Caco-2 (cell line): ENCODE measurements at regions of chr2 and their contacts with region 1.

Region 1: GRCh38 chr2:96856776-96857673 is 791 bp downstream of the ANKRD39 start:
- DNase-seq: peak in 1 of 2 experiments; percentile 45
- H3K4me3 ChIP-seq: peak overlapping the region; percentile 79
- H3K4me3 Mint-ChIP-seq: peak overlapping the region; percentile 68
- H3K27ac Mint-ChIP-seq: peak overlapping the region; percentile 10
- H3K4me1 ChIP-seq: peaks cover 9% of the 10 kb centered on the region
- H3K4me1 Mint-ChIP-seq: peaks cover 17% of the 10 kb centered on the region
- H3K27me3 ChIP-seq: no peaks in the 10 kb centered on the region
- H3K27me3 Mint-ChIP-seq: no peaks in the 10 kb centered on the region
- CTCF ChIP-seq: no peak

Region 2: GRCh38 chr2:96665083-96665569 is 191.9 kb before region 1 on chr2:
- CTCF ChIA-PET with region 1: no interaction called
- POLR2A ChIA-PET with region 1: no interaction called
- intact Hi-C with region 1: no loop called
- DNase-seq: peak; percentile 34 to 41
- H3K4me3 ChIP-seq: no peak overlapping the region
- H3K4me3 Mint-ChIP-seq: no peak overlapping the region
- H3K27ac Mint-ChIP-seq: no peak overlapping the region
- H3K4me1 ChIP-seq: no peaks in the 10 kb centered on the region
- H3K4me1 Mint-ChIP-seq: peaks cover 13% of the 10 kb centered on the region
- H3K27me3 ChIP-seq: no peaks in the 10 kb centered on the region
- H3K27me3 Mint-ChIP-seq: no peaks in the 10 kb centered on the region
- CTCF ChIP-seq: no peak

Region 3: GRCh38 chr2:96685577-96686459 is 171.2 kb before region 1 on chr2:
- CTCF ChIA-PET with region 1: no interaction called
- POLR2A ChIA-PET with region 1: no interaction called
- intact Hi-C with region 1: no loop called
- DNase-seq: no peak
- H3K4me3 ChIP-seq: no peak overlapping the region
- H3K4me3 Mint-ChIP-seq: no peak overlapping the region
- H3K27ac Mint-ChIP-seq: no peak overlapping the region
- H3K4me1 ChIP-seq: peaks cover 12% of the 10 kb centered on the region
- H3K4me1 Mint-ChIP-seq: peaks cover 6% of the 10 kb centered on the region
- H3K27me3 ChIP-seq: no peaks in the 10 kb centered on the region
- H3K27me3 Mint-ChIP-seq: no peaks in the 10 kb centered on the region
- CTCF ChIP-seq: no peak

Region 4: DNA sequence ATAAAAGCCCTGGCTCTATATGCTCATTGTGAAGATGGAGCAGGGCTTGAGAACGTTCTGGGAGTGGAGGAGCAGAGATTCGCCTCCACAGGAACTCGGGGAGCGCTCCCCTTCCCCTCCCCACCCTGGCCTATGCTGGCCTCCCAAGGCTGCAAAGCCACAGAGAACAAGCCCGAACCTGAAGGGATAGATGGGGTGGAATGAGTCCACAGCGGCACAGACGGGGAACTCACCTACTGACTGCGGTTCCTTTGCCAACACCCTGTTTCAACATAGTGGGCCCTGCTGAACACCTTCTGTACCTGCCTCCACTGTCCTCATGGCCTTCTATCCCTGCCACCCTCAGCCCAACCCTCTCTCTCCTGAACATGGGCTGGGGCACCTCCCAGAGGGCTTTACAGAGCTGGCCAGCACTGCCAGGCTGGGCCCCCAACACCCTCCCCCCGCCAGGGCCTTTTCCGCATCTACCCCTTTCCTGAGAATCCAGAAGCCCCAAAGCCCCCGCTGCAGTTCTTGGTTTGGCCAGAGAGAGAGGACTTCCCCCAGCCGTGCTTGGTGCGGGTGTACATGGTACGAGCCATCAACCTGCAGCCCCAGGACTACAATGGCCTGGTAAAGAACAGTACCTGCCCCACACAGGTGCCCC is 158.7 kb before region 1 on chr2:
- CTCF ChIA-PET with region 1: no interaction called
- POLR2A ChIA-PET with region 1: no interaction called
- intact Hi-C with region 1: no loop called
- DNase-seq: no peak
- H3K4me3 ChIP-seq: no peak overlapping the region
- H3K4me3 Mint-ChIP-seq: no peak overlapping the region
- H3K27ac Mint-ChIP-seq: no peak overlapping the region
- H3K4me1 ChIP-seq: no peaks in the 10 kb centered on the region
- H3K4me1 Mint-ChIP-seq: no peaks in the 10 kb centered on the region
- H3K27me3 ChIP-seq: no peaks in the 10 kb centered on the region
- H3K27me3 Mint-ChIP-seq: no peaks in the 10 kb centered on the region
- CTCF ChIP-seq: no peak

Region 5: DNA sequence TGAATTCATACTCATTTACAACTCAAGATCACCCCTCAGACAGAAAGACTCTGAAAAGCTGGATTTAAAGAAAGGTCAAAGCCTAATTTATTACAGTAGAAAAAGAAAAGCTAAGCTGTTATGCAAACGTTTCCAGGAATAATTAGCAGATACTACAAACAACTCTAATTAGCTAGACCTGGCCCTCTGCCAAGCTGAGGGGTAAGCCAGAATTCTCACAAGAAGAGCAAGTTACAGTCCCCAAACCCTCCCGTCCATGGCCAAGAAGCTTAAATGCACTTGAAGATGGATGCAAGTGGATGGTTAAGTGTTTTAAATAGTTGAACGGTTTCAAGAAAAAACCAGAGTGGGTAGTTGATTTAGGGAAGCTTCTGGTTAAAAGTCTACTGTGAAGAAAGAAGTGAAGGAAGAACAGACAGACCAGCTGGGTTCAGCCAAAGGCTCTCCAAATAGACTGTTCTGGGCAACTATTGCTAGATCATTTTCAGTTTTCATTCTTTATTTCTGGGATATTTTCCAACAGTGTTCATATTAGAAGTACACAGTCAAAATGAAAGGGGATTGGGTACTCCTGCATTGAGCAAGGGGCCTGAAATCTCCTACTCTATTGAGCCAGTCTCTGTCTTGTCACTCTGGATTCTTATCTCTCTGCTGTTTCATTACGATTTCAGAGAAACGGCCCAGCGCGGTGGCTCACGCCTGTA is 122.0 kb before region 1 on chr2:
- CTCF ChIA-PET with region 1: no interaction called
- POLR2A ChIA-PET with region 1: no interaction called
- intact Hi-C with region 1: no loop called
- DNase-seq: no peak
- H3K4me3 ChIP-seq: no peak overlapping the region
- H3K4me3 Mint-ChIP-seq: no peak overlapping the region
- H3K27ac Mint-ChIP-seq: no peak overlapping the region
- H3K4me1 ChIP-seq: peaks cover 6% of the 10 kb centered on the region
- H3K4me1 Mint-ChIP-seq: peaks cover 10% of the 10 kb centered on the region
- H3K27me3 ChIP-seq: no peaks in the 10 kb centered on the region
- H3K27me3 Mint-ChIP-seq: no peaks in the 10 kb centered on the region
- CTCF ChIP-seq: no peak

Region 6: DNA sequence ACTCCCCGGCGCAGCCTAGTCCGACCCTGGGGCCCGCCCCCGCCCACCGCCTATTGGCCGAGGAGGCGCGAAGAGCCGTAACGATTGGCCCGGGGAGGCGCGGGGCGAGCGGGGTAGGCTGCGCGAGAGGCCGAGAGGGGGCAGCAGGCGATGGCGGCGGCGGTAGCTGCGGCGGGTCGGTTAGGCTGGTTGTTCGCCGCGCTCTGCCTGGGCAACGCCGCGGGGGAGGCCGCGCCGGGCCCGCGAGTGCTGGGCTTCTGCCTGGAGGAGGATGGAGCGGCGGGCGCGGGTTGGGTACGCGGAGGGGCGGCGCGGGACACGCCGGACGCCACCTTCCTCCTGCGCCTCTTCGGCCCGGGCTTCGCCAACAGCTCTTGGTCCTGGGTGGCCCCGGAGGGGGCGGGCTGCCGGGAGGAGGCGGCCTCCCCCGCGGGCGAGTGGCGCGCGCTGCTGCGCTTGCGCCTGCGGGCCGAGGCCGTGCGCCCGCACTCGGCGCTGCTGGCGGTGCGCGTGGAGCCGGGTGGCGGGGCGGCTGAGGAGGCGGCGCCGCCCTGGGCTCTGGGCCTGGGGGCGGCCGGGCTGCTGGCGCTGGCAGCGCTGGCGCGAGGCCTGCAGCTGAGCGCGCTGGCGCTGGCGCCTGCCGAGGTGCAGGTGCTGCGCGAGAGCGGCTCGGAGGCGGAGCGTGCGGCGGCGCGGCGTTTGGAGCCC is 40.7 kb before region 1 on chr2 and contains the start of gene CNNM3:
- CTCF ChIA-PET with region 1: interaction called, 17 read pairs
- POLR2A ChIA-PET with region 1: interaction called, 7 read pairs
- intact Hi-C with region 1: no loop called
- DNase-seq: peak; percentile 97 to 99
- H3K4me3 ChIP-seq: peak within 1 kb of the TSS; percentile 96
- H3K4me3 Mint-ChIP-seq: peak within 1 kb of the TSS; percentile 84
- H3K27ac Mint-ChIP-seq: peak within 1 kb of the TSS; percentile 42
- H3K4me1 ChIP-seq: peaks cover 32% of the 10 kb centered on the region
- H3K4me1 Mint-ChIP-seq: peaks cover 42% of the 10 kb centered on the region
- H3K27me3 ChIP-seq: no peaks in the 10 kb centered on the region
- H3K27me3 Mint-ChIP-seq: no peaks in the 10 kb centered on the region
- CTCF ChIP-seq: peak; percentile 60 to 72
- total RNA-seq, gene CNNM3: 62.5 and 69.1 TPM in 2 replicates

Region 7: DNA sequence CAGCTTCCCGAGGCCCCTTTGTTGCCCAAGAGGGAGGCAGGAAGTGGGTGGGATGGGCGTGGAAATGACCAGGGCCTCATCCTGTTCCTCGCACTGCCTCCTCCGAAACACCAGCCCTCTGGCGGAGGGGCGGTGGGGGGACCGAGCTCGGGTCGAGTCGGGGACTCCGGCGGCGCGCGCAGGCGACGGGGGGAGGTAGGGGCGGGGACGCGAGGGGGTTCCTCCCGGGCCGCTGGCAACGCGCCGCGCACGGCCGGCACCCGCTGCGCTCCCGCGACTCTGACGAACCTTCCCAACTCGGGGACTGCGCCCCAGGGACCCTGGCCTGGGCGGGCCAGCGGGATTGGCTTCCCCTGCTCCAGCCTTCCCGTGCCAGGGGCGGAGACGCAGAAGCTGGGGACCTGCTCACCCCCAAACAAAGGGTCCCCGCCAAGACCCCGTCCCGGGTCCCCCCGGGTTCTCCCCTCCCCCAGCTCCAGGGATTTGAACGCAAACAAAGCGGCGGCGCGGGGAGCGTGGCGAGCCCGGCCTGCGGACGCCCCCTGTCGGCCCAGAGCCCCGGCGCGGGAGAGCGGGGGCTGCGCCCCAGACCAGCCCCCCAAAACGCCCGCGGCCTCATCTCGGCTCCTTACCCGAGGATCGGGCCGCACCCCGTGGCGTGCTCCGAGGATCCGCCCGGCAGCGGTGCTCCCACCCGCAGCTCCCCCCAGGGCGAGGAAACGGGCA is 11.7 kb after region 1 on chr2:
- CTCF ChIA-PET with region 1: interaction called, 71 read pairs
- POLR2A ChIA-PET with region 1: interaction called, 23 read pairs
- intact Hi-C with region 1: no loop called
- DNase-seq: peak; percentile 92
- H3K4me3 ChIP-seq: peak overlapping the region; percentile 95
- H3K4me3 Mint-ChIP-seq: peak overlapping the region; percentile 78
- H3K27ac Mint-ChIP-seq: peak overlapping the region; percentile 75
- H3K4me1 ChIP-seq: peaks cover 19% of the 10 kb centered on the region
- H3K4me1 Mint-ChIP-seq: no peaks in the 10 kb centered on the region
- H3K27me3 ChIP-seq: no peaks in the 10 kb centered on the region
- H3K27me3 Mint-ChIP-seq: no peaks in the 10 kb centered on the region
- CTCF ChIP-seq: peak; percentile 39 to 84

Region 8: GRCh38 chr2:96874118-96874831 is 17.2 kb after region 1 on chr2:
- CTCF ChIA-PET with region 1: interaction called, 71 read pairs
- POLR2A ChIA-PET with region 1: interaction called, 23 read pairs
- intact Hi-C with region 1: no loop called
- DNase-seq: no peak
- H3K4me3 ChIP-seq: no peak overlapping the region
- H3K4me3 Mint-ChIP-seq: no peak overlapping the region
- H3K27ac Mint-ChIP-seq: no peak overlapping the region
- H3K4me1 ChIP-seq: peaks cover 16% of the 10 kb centered on the region
- H3K4me1 Mint-ChIP-seq: no peaks in the 10 kb centered on the region
- H3K27me3 ChIP-seq: no peaks in the 10 kb centered on the region
- H3K27me3 Mint-ChIP-seq: no peaks in the 10 kb centered on the region
- CTCF ChIP-seq: no peak

Region 9: DNA sequence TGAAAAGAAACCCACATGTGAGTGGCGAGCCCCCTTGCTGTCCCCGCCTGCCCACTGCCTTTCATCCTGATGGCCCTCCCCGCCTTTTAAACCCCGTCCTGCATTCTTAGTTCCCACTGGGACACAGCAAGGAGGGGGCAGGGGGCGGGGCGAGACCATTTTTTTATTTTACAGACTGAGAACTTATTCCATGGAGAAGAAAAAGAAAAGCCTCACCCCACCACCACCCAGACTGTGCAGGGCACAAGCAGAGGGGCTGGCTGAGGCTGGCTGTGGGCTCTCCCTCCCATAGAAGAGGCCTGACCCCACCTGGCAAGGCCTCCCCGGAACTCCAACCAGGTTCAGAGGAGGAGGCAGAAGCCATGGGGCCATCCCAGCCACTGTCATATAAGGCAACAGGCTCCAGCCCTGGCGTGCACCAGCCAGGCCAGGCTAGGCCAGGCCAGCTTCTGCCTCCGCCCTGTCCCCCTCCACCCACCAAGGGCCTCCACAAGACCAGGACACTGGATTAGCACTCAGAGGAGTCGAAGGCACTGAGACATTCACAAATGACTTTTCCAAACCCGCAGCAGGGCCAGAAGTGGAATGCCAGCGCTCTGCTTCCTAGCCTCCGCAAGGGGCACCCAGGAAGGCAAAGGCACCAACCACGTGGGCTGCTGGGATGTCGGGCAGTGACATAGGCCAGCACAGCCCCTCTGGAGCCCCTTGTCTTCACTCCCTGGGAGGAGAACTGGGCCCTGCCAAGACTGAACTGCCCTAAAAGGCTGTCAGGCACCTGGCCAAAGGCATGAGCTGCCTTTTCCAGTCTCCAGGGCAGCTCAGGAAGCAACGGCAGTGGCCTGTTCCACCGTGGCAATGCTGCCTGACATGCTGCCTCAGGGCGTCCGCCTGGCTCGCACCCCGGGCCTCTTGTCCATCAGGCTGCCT is 50.4 kb after region 1 on chr2:
- CTCF ChIA-PET with region 1: interaction called, 18 read pairs
- POLR2A ChIA-PET with region 1: interaction called, 9 read pairs
- intact Hi-C with region 1: no loop called
- DNase-seq: no peak
- H3K4me3 ChIP-seq: no peak overlapping the region
- H3K4me3 Mint-ChIP-seq: no peak overlapping the region
- H3K27ac Mint-ChIP-seq: no peak overlapping the region
- H3K4me1 ChIP-seq: no peaks in the 10 kb centered on the region
- H3K4me1 Mint-ChIP-seq: no peaks in the 10 kb centered on the region
- H3K27me3 ChIP-seq: no peaks in the 10 kb centered on the region
- H3K27me3 Mint-ChIP-seq: no peaks in the 10 kb centered on the region
- CTCF ChIP-seq: no peak

Region 10: DNA sequence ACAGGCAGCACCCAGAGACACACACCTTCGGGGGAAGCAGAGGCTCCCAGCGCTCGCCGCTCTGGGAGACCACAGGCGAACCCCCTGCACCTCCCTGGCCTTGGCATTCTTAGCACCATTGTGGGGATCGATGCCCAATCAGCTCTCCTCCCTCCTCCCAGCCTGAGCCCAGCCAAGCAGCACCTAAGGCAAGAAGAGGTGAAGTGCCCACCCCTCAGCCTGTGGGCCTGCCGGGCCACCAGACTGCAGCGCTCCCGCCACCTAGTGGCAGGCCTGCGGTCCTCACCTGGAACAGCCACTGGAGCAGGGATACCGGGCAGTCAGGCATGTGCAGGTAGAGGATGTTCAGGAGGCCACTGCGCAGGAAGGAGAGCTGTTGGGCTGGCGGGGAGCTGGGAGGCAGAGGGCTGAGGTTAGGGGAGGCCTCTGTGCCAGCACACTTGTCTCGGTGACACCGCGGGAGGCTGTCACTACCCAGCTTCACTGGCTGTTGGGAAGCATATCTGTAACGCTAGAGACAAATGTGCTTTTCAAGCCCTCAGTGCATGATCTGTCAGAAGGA is 94.1 kb after region 1 on chr2:
- CTCF ChIA-PET with region 1: interaction called, 72 read pairs
- POLR2A ChIA-PET with region 1: no interaction called
- intact Hi-C with region 1: loop called (anchors 1 kb)
- DNase-seq: peak; percentile 85 to 92
- H3K4me3 ChIP-seq: no peak overlapping the region
- H3K4me3 Mint-ChIP-seq: no peak overlapping the region
- H3K27ac Mint-ChIP-seq: no peak overlapping the region
- H3K4me1 ChIP-seq: no peaks in the 10 kb centered on the region
- H3K4me1 Mint-ChIP-seq: no peaks in the 10 kb centered on the region
- H3K27me3 ChIP-seq: no peaks in the 10 kb centered on the region
- H3K27me3 Mint-ChIP-seq: no peaks in the 10 kb centered on the region
- CTCF ChIP-seq: peak; percentile 96 to 97